ENCODE measurements at regions of chr6 and their contacts with region 1.

Region 1: GRCh38 chr6:41735427-41736356 is at the start of gene TFEB:
- DNase-seq: peak; percentile 99
- ATAC-seq: peak; percentile 41
- H3K4me3 Mint-ChIP-seq: peak within 1 kb of the TSS; percentile 84
- H3K27ac Mint-ChIP-seq: peak within 1 kb of the TSS; percentile 84
- H3K4me1 Mint-ChIP-seq: peaks cover 28% of the 10 kb centered on the region
- H3K27me3 Mint-ChIP-seq: no peaks in the 10 kb centered on the region
- CTCF ChIP-seq: peak; percentile 26
- total RNA-seq, gene TFEB: 203 and 205 TPM in 2 replicates

Region 2: GRCh38 chr6:41505122-41506049 is 230.3 kb before region 1 on chr6:
- CTCF ChIA-PET with region 1: no interaction called
- POLR2A ChIA-PET with region 1: interaction called, 11 read pairs
- intact Hi-C with region 1: loop called (anchors 1 kb)
- DNase-seq: peak; percentile 66
- ATAC-seq: peak; percentile 86
- H3K4me3 Mint-ChIP-seq: peak overlapping the region; percentile 81
- H3K27ac Mint-ChIP-seq: peak overlapping the region; percentile 92
- H3K4me1 Mint-ChIP-seq: peaks cover 43% of the 10 kb centered on the region
- H3K27me3 Mint-ChIP-seq: no peaks in the 10 kb centered on the region
- CTCF ChIP-seq: no peak

Region 3: GRCh38 chr6:41659935-41660505 is 75.7 kb before region 1 on chr6:
- CTCF ChIA-PET with region 1: no interaction called
- POLR2A ChIA-PET with region 1: interaction called, 10 read pairs
- intact Hi-C with region 1: no loop called
- DNase-seq: no peak
- ATAC-seq: no peak
- H3K4me3 Mint-ChIP-seq: no peak overlapping the region
- H3K27ac Mint-ChIP-seq: no peak overlapping the region
- H3K4me1 Mint-ChIP-seq: no peaks in the 10 kb centered on the region
- H3K27me3 Mint-ChIP-seq: peaks cover 29% of the 10 kb centered on the region
- CTCF ChIP-seq: no peak

Region 4: GRCh38 chr6:41697861-41698781 is 37.6 kb before region 1 on chr6:
- CTCF ChIA-PET with region 1: interaction called, 3 read pairs
- POLR2A ChIA-PET with region 1: interaction called, 1,669 read pairs
- intact Hi-C with region 1: loop called (anchors 5 kb)
- DNase-seq: no peak
- ATAC-seq: no peak
- H3K4me3 Mint-ChIP-seq: no peak overlapping the region
- H3K27ac Mint-ChIP-seq: peak overlapping the region; percentile 62
- H3K4me1 Mint-ChIP-seq: peaks cover 87% of the 10 kb centered on the region
- H3K27me3 Mint-ChIP-seq: no peaks in the 10 kb centered on the region
- CTCF ChIP-seq: no peak

Region 5: DNA sequence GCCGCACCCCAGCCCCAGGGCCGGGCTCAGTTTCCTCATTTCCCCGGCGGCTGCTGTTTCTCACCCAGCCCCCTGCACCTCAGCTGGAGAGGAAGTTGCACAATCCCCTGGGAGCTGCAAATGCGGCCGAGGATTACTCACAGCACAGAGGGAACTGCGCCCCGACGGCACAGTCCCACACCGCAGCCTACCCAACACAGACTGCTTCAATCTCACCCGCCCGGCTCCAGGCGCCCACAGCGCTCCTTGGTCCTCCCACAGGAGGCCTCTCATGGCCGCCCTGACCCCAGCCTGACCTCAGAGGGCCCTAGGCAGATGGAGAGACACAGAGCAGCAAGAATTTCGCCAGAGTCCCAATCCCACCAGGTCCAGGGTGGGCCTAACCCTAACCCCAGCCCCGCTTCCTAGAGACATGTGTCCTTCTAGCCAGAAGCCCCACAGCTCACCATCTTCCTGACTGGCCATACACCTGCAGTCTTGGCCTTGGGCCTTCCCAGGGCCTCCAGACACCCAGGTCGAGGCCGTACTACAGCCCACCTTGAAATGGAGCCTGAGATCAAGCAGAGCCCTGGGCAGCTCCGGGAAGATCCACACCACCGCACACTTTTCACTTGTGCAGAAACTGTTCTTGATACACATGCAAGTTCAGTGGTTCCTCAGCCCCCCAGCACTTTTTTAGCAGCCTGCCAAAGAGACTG is 12.0 kb before region 1 on chr6:
- CTCF ChIA-PET with region 1: interaction called, 29 read pairs
- POLR2A ChIA-PET with region 1: interaction called, 1,669 read pairs
- intact Hi-C with region 1: loop called (anchors 1 kb)
- DNase-seq: peak; percentile 76
- ATAC-seq: peak; percentile 86
- H3K4me3 Mint-ChIP-seq: peak overlapping the region; percentile 92
- H3K27ac Mint-ChIP-seq: peak overlapping the region; percentile 99
- H3K4me1 Mint-ChIP-seq: peaks cover 97% of the 10 kb centered on the region
- H3K27me3 Mint-ChIP-seq: no peaks in the 10 kb centered on the region
- CTCF ChIP-seq: no peak

Region 6: DNA sequence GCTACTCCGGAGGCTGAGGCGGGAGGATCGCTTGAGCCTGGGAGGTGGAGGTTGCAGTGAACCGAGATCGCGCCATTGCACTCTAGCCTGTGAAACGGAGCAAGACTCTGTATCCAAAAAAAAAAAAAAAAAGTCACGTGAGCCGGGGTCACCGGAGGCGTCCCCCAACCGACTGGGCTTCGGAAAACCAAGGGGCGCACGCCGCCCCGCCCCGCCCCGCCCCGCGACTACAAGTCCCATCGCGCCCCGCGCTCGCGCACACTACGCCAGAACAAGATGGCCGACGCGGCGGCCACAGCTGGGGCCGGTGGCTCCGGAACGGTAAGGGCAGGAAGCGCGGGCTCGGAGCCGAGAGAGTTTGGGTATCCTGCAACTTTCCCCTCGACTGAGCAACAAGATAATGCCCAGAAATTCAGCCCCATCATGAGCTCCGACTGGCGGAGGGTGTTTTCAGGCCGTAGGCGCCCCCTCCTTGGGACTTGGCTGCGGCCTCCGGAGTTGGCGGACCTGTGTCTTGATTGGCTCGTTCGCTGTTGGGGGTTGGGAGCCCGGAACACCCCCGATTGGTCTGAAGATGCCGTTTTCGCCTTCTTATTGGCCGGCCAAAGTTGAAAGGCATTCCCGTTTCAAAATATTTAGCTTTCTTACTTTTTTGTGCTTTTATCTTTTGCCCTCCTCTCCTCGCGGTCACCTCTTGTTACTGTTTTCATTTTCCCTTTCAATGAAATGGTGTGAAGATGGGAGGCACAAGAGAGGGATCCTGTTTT is 314.8 kb after region 1 on chr6 and contains the start of gene TAF8:
- CTCF ChIA-PET with region 1: interaction called, 6 read pairs
- POLR2A ChIA-PET with region 1: interaction called, 33 read pairs
- intact Hi-C with region 1: loop called (anchors 1 kb)
- DNase-seq: peak; percentile 81
- ATAC-seq: peak; percentile 74
- H3K4me3 Mint-ChIP-seq: peak within 1 kb of the TSS; percentile 96
- H3K27ac Mint-ChIP-seq: peak within 1 kb of the TSS; percentile 99
- H3K4me1 Mint-ChIP-seq: peaks cover 54% of the 10 kb centered on the region
- H3K27me3 Mint-ChIP-seq: no peaks in the 10 kb centered on the region
- CTCF ChIP-seq: no peak
- total RNA-seq, gene TAF8: 47.2 and 55.7 TPM in 2 replicates

Region 7: DNA sequence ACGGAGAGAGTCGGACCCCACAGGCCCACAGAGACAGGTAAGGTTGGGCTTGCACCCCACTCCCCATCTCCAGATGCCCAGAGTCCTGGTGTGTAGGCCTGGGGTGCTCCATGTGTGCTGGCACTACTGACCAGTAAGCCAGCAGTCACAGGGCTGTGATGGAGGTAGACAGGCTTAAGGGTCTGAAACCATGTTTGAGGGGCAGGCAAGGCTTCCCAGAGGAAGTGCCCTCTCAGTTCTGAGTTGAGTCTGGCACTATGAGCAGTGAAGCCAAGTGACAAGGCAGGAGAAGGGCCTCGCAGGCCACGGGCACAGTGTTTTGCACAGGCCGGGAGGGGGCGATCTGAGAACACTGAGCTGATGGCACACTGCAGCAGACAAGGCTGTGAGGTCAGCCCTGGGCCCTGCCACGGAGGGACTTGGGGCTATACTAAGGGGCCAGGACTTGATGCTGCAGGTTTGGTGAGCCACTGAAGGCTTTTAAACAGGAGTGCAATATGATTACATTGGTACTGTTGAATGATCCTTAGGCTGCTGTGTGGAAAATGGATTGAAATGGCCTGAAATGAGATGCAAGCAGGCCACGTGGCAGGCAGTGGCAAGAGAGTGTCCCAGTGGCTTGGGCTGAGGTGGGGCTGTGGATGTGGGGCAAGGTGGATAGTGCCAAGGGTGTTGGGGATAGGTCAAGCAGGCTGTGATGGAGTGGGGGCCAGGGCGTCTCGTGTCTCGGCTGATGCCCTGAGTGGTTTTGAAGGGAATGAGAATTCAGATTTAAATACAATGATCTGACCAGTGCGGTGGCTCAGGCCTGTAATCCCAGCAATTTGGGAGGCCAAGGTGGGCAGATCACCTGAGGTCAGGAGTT is 1527.9 kb after region 1 on chr6:
- CTCF ChIA-PET with region 1: no interaction called
- POLR2A ChIA-PET with region 1: no interaction called
- intact Hi-C with region 1: no loop called
- DNase-seq: peak; percentile 72
- ATAC-seq: peak; percentile 100
- H3K4me3 Mint-ChIP-seq: no peak overlapping the region
- H3K27ac Mint-ChIP-seq: peak overlapping the region; percentile 12
- H3K4me1 Mint-ChIP-seq: peaks cover 6% of the 10 kb centered on the region
- H3K27me3 Mint-ChIP-seq: no peaks in the 10 kb centered on the region
- CTCF ChIP-seq: peak; percentile 27

Measured in activated B cell treated with CpG ODN at 0.5 μM for 24 hours (primary cell).